ENCODE measurements at regions of chr3 and their contacts with region 1.

Region 1: DNA sequence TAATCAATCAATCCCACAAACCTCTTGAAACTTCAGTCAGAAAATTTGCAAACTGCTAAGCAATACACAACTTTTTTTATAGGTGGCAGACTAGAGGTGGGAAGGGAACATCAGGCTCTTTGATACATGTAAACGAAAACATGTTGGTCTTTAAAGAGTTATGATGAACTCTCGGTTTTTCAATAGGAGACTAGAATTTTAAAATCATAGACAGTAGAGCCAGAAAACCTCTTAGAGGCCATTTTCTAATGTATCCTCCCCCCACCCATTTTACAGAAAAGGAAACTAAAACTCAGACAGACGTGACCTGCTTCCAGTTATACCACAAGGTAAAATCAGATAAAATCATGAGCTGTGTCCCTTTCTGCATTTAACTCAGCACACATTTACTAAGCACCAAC is 179.1 kb upstream of the LPP start:
- DNase-seq: peak; percentile 56
- ATAC-seq: no peak
- H3K4me3 ChIP-seq: peak overlapping the region in 3 of 5 experiments; percentile 29 to 51 (median 34)
- H3K4me3 Mint-ChIP-seq: peak overlapping the region; percentile 81
- H3K27ac ChIP-seq: no peak overlapping the region
- H3K27ac Mint-ChIP-seq: peak overlapping the region; percentile 73
- H3K4me1 ChIP-seq: peaks cover 51 to 57% of the 10 kb centered on the region in 2 donors
- H3K4me1 Mint-ChIP-seq: peaks cover 65% of the 10 kb centered on the region
- H3K27me3 ChIP-seq: peaks cover 0 to 14% (median 5%) of the 10 kb centered on the region in 4 experiments
- H3K27me3 Mint-ChIP-seq: peaks cover 26% of the 10 kb centered on the region
- CTCF ChIP-seq: peak; percentile 22

Region 2: DNA sequence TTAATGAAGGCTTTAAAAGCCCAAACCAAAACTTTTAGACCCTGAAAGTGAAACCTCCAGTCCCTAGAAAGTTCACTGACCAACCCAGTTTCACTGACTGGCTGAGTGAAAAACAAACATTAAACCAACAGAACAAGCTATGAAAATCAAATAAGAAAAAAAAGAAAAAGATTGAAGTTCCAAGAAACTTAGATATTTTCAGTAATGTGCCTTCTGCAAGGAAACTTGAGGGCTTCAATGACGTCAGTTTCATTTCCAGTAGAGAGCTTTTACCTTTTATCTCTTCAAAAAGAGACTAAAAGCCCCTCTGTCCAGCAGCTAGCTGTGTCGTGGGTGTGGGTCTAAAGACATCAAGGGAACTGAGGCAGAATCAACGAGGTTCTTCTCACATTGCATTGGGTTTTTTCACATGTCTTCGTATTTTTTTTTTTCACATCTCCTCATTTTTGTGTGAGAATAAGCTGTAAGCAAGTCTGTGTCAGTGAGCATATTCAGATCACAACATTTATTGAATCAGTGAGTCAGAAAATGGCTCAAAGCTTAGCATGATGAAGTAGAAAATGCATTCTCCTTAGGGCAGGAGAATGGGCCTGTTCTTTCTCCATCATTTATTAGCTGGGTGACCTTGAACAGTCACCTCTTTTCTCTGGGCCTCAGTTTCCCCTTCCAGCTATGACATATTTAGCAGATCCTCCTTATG is 174.8 kb before region 1 on chr3:
- CTCF ChIA-PET with region 1: no interaction called
- POLR2A ChIA-PET with region 1: no interaction called
- intact Hi-C with region 1: no loop called
- DNase-seq: no peak
- ATAC-seq: no peak
- H3K4me3 ChIP-seq: no peak overlapping the region
- H3K4me3 Mint-ChIP-seq: no peak overlapping the region
- H3K27ac ChIP-seq: no peak overlapping the region
- H3K27ac Mint-ChIP-seq: peak overlapping the region; percentile 38
- H3K4me1 ChIP-seq: peaks cover 4 to 25% of the 10 kb centered on the region in 2 donors
- H3K4me1 Mint-ChIP-seq: peaks cover 32% of the 10 kb centered on the region
- H3K27me3 ChIP-seq: peaks cover 0 to 5% (median 0%) of the 10 kb centered on the region in 4 experiments
- H3K27me3 Mint-ChIP-seq: peaks cover 6% of the 10 kb centered on the region
- CTCF ChIP-seq: no peak

Region 3: GRCh38 chr3:187850331-187850921 is 124.4 kb before region 1 on chr3:
- CTCF ChIA-PET with region 1: no interaction called
- POLR2A ChIA-PET with region 1: no interaction called
- intact Hi-C with region 1: no loop called
- DNase-seq: no peak
- ATAC-seq: no peak
- H3K4me3 ChIP-seq: no peak overlapping the region
- H3K4me3 Mint-ChIP-seq: no peak overlapping the region
- H3K27ac ChIP-seq: no peak overlapping the region
- H3K27ac Mint-ChIP-seq: no peak overlapping the region
- H3K4me1 ChIP-seq: no peaks in the 10 kb centered on the region
- H3K4me1 Mint-ChIP-seq: no peaks in the 10 kb centered on the region
- H3K27me3 ChIP-seq: no peaks in the 10 kb centered on the region
- H3K27me3 Mint-ChIP-seq: no peaks in the 10 kb centered on the region
- CTCF ChIP-seq: no peak

Region 4: GRCh38 chr3:187919048-187919447 is 55.8 kb before region 1 on chr3:
- CTCF ChIA-PET with region 1: no interaction called
- POLR2A ChIA-PET with region 1: no interaction called
- intact Hi-C with region 1: loop called (anchors 2 kb)
- DNase-seq: peak; percentile 77
- ATAC-seq: peak; percentile 86
- H3K4me3 ChIP-seq: peak overlapping the region; percentile 11 to 62 (median 44)
- H3K4me3 Mint-ChIP-seq: peak overlapping the region; percentile 90
- H3K27ac ChIP-seq: peak overlapping the region; percentile 45 to 61
- H3K27ac Mint-ChIP-seq: peak overlapping the region; percentile 87
- H3K4me1 ChIP-seq: peaks cover 20 to 22% of the 10 kb centered on the region in 2 donors
- H3K4me1 Mint-ChIP-seq: peaks cover 31% of the 10 kb centered on the region
- H3K27me3 ChIP-seq: peaks cover 0 to 9% (median 2%) of the 10 kb centered on the region in 4 experiments
- H3K27me3 Mint-ChIP-seq: peaks cover 51% of the 10 kb centered on the region
- CTCF ChIP-seq: no peak

Region 5: DNA sequence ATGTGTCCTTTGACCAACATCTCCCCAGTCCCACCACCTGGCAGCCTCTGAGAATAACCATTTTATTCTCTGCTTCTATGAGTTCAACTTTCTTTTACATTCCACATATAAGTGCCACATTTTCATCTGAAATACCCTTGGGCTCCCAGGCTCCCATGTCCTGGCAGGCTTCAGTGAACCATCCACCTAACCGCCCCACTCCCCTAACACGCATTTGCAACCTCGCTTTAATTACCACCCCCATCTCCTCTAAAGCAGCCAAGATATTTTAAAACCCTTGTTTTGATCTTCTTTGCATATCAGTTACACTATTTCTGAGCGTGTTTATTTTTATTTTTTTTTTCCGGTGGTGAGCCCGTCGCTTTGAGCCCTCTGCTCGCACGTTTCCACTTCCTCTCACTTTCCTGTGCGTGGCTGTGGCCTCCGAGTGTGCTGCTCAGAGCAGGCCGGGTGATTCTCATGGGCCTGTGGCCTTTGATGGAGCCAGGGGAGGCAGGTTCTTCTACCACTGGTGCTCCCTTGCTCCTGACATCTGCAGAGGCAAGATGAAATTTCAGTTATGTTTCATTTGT is 16.4 kb before region 1 on chr3:
- CTCF ChIA-PET with region 1: interaction called, 3 read pairs
- POLR2A ChIA-PET with region 1: no interaction called
- intact Hi-C with region 1: loop called (anchors 2 kb)
- DNase-seq: peak; percentile 58
- ATAC-seq: peak; percentile 90
- H3K4me3 ChIP-seq: peak overlapping the region in 3 of 5 experiments; percentile 21 to 49 (median 23)
- H3K4me3 Mint-ChIP-seq: peak overlapping the region; percentile 69
- H3K27ac ChIP-seq: no peak overlapping the region
- H3K27ac Mint-ChIP-seq: peak overlapping the region; percentile 47
- H3K4me1 ChIP-seq: peaks cover 10 to 21% of the 10 kb centered on the region in 2 donors
- H3K4me1 Mint-ChIP-seq: peaks cover 18% of the 10 kb centered on the region
- H3K27me3 ChIP-seq: no peaks in the 10 kb centered on the region
- H3K27me3 Mint-ChIP-seq: peaks cover 6% of the 10 kb centered on the region
- CTCF ChIP-seq: no peak

Region 6: DNA sequence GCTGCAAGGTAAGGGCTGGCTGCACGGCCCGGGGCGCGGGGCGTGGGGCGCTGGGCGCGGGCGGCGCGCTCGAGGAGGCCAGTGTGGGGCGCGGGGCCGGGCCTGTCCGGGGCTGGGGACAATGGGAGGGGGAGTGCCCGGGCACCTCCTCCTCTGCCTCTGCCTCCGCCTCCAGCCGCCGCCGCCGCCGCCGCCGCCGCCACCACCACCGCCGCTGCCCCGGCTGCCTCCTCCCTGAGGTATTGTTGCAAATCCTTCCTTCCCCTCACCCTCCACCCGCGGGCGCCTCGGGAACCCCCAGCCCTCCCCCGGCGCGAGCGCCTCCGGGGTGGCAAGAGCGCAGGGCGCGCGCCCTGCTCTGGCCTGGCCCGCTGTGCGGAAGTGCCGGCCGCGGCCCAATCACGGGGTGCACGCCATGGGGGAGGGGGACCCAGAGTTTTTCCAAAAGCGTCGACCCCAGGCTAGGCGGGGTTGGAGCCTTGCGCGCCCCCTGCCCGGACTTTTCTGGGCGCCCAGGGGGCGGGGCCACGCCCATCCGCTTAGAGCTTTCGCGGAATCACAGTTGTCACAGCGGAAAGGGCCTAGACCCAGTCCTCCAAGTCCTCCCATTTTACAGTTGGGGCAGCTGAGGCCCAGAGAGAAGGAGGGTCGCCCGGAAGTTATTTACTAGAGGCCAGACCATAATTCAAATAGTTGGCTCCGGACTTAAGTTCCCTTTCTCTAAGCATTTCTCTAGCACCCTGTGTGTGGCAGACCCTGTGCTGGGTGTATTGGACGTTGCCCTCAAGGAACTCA is 179.3 kb after region 1 on chr3 and contains the start of gene LPP:
- CTCF ChIA-PET with region 1: interaction called, 5 read pairs
- POLR2A ChIA-PET with region 1: no interaction called
- intact Hi-C with region 1: loop called (anchors 2 kb)
- DNase-seq: peak; percentile 94
- ATAC-seq: peak; percentile 87
- H3K4me3 ChIP-seq: peak within 1 kb of the TSS; percentile 80 to 97 (median 93)
- H3K4me3 Mint-ChIP-seq: peak within 1 kb of the TSS; percentile 95
- H3K27ac ChIP-seq: peak within 1 kb of the TSS; percentile 88 to 91
- H3K27ac Mint-ChIP-seq: peak within 1 kb of the TSS; percentile 95
- H3K4me1 ChIP-seq: peaks cover 18 to 27% of the 10 kb centered on the region in 2 donors
- H3K4me1 Mint-ChIP-seq: peaks cover 51% of the 10 kb centered on the region
- H3K27me3 ChIP-seq: no peaks in the 10 kb centered on the region
- H3K27me3 Mint-ChIP-seq: no peaks in the 10 kb centered on the region
- CTCF ChIP-seq: peak; percentile 19
- total RNA-seq, gene LPP: 81.7 and 94.5 TPM in 2 replicates

Region 7: DNA sequence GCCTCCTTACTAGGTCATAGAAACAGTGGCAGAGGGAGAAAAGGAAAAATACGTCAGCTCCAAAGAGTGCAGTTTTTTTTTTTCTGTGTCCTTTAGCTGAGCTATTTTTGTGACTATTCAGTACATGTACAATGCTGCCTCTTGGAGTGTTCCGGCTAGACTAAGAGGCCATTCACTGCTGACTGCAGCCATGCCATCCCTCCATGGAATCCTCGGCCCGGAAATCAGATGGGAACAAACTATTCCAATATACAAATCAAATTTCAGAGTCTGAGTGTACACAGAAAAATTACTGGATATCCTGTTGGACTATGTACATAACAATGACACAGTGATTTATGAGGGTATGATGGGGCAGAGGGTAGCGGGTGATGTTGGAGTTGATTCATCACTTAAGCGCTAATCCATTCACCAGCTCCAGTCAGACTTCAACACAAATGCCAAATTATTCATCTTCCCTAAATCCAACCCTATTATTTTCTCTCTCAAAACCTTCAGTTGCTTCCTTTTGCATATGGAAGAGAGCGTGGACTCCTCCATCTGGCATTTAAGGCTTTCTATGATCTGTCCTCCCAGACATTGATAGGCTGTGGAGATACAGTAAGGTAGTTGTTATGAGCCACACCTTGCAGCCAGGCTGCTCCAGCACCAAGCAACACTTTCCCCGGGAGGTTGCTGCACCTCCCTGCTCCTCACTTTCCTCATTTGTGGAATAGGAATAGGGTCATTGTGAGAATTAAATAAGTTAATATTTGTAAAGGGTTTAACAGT is 288.2 kb after region 1 on chr3:
- CTCF ChIA-PET with region 1: no interaction called
- POLR2A ChIA-PET with region 1: no interaction called
- intact Hi-C with region 1: no loop called
- DNase-seq: no peak
- ATAC-seq: no peak
- H3K4me3 ChIP-seq: no peak overlapping the region
- H3K4me3 Mint-ChIP-seq: no peak overlapping the region
- H3K27ac ChIP-seq: no peak overlapping the region
- H3K27ac Mint-ChIP-seq: no peak overlapping the region
- H3K4me1 ChIP-seq: no peaks in the 10 kb centered on the region
- H3K4me1 Mint-ChIP-seq: peaks cover 1% of the 10 kb centered on the region
- H3K27me3 ChIP-seq: no peaks in the 10 kb centered on the region
- H3K27me3 Mint-ChIP-seq: no peaks in the 10 kb centered on the region
- CTCF ChIP-seq: no peak

Region 8: DNA sequence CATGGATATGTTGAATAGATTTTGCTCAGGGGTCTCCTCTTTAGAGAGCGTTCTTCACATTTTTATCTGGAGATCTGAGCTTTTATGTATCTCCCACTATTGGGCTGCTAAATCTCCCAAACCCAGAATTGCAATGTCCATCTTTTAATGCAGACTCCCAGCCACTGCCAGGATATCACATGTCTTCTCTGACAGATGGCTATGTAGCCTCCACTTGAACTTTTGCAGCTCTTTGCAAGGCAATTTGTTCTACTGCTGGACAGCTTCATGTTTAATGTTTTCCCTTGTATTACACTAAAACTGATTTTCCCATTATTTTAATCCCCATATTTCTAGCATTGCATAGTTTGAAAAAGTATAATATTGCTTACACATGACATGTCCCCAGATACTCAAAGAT is 356.3 kb after region 1 on chr3:
- CTCF ChIA-PET with region 1: no interaction called
- POLR2A ChIA-PET with region 1: no interaction called
- intact Hi-C with region 1: no loop called
- DNase-seq: no peak
- ATAC-seq: no peak
- H3K4me3 ChIP-seq: no peak overlapping the region
- H3K4me3 Mint-ChIP-seq: no peak overlapping the region
- H3K27ac ChIP-seq: no peak overlapping the region
- H3K27ac Mint-ChIP-seq: no peak overlapping the region
- H3K4me1 ChIP-seq: peaks cover 3 to 6% of the 10 kb centered on the region in 2 donors
- H3K4me1 Mint-ChIP-seq: peaks cover 27% of the 10 kb centered on the region
- H3K27me3 ChIP-seq: no peaks in the 10 kb centered on the region
- H3K27me3 Mint-ChIP-seq: no peaks in the 10 kb centered on the region
- CTCF ChIP-seq: no peak

Region 9: GRCh38 chr3:188439080-188439479 is 464.2 kb after region 1 on chr3:
- CTCF ChIA-PET with region 1: no interaction called
- POLR2A ChIA-PET with region 1: no interaction called
- intact Hi-C with region 1: loop called (anchors 5 kb)
- DNase-seq: peak; percentile 88
- ATAC-seq: peak; percentile 90
- H3K4me3 ChIP-seq: peak overlapping the region in 1 of 5 experiments; percentile 27
- H3K4me3 Mint-ChIP-seq: peak overlapping the region; percentile 44
- H3K27ac ChIP-seq: peak overlapping the region; percentile 93 to 96
- H3K27ac Mint-ChIP-seq: peak overlapping the region; percentile 92
- H3K4me1 ChIP-seq: peaks cover 71 to 80% of the 10 kb centered on the region in 2 donors
- H3K4me1 Mint-ChIP-seq: peaks cover 82% of the 10 kb centered on the region
- H3K27me3 ChIP-seq: no peaks in the 10 kb centered on the region
- H3K27me3 Mint-ChIP-seq: no peaks in the 10 kb centered on the region
- CTCF ChIP-seq: no peak

Region 10: GRCh38 chr3:188749010-188749617 is 774.2 kb after region 1 on chr3:
- CTCF ChIA-PET with region 1: interaction called, 3 read pairs
- POLR2A ChIA-PET with region 1: no interaction called
- intact Hi-C with region 1: loop called (anchors 10 kb)
- DNase-seq: peak; percentile 65
- ATAC-seq: no peak
- H3K4me3 ChIP-seq: no peak overlapping the region
- H3K4me3 Mint-ChIP-seq: no peak overlapping the region
- H3K27ac ChIP-seq: no peak overlapping the region
- H3K27ac Mint-ChIP-seq: no peak overlapping the region
- H3K4me1 ChIP-seq: peaks cover 18 to 20% of the 10 kb centered on the region in 2 donors
- H3K4me1 Mint-ChIP-seq: peaks cover 22% of the 10 kb centered on the region
- H3K27me3 ChIP-seq: no peaks in the 10 kb centered on the region
- H3K27me3 Mint-ChIP-seq: no peaks in the 10 kb centered on the region
- CTCF ChIP-seq: peak; percentile 76

Measured in B cell (primary cell).